ENCODE measurements at regions of chr17 and their contacts with region 1.

Region 1: GRCh38 chr17:45148183-45149036 is at the start of gene HEXIM1:
- DNase-seq: peak; percentile 99
- H3K4me3 Mint-ChIP-seq: peak within 1 kb of the TSS; percentile 97
- H3K27ac Mint-ChIP-seq: peak within 1 kb of the TSS; percentile 100
- H3K4me1 Mint-ChIP-seq: peaks cover 23% of the 10 kb centered on the region
- H3K27me3 Mint-ChIP-seq: no peaks in the 10 kb centered on the region
- CTCF ChIP-seq: no peak
- total RNA-seq, gene HEXIM1: 22.5 and 26.7 TPM in 2 replicates

Region 2: DNA sequence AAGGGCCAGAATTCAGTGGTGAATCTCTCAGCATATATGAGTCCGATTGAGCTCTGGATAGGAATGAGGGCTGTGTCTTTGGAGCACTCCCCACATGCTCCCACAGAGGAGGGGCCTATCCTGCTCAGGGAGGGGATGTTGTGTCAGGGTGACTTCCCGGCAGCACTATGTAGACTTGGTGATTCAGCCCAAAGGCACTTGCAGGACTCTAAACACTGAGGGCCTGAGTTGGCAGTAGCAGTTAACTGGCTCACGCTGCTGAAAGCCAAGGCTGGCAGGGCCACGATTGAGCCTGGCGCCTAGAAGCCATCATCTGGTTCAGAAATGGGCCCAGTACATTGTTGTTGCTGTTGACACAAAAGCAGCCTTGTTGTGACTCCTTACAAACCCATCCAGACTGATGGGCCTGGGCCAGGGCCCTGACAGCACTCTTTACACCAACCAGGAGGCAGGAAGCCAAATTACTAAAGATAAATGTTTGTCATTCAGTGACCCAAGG is 55.4 kb before region 1 on chr17:
- CTCF ChIA-PET with region 1: interaction called, 5 read pairs
- POLR2A ChIA-PET with region 1: interaction called, 15 read pairs
- intact Hi-C with region 1: no loop called
- DNase-seq: peak; percentile 96
- H3K4me3 Mint-ChIP-seq: peak overlapping the region; percentile 44
- H3K27ac Mint-ChIP-seq: peak overlapping the region; percentile 98
- H3K4me1 Mint-ChIP-seq: peaks cover 25% of the 10 kb centered on the region
- H3K27me3 Mint-ChIP-seq: no peaks in the 10 kb centered on the region
- CTCF ChIP-seq: no peak

Region 3: DNA sequence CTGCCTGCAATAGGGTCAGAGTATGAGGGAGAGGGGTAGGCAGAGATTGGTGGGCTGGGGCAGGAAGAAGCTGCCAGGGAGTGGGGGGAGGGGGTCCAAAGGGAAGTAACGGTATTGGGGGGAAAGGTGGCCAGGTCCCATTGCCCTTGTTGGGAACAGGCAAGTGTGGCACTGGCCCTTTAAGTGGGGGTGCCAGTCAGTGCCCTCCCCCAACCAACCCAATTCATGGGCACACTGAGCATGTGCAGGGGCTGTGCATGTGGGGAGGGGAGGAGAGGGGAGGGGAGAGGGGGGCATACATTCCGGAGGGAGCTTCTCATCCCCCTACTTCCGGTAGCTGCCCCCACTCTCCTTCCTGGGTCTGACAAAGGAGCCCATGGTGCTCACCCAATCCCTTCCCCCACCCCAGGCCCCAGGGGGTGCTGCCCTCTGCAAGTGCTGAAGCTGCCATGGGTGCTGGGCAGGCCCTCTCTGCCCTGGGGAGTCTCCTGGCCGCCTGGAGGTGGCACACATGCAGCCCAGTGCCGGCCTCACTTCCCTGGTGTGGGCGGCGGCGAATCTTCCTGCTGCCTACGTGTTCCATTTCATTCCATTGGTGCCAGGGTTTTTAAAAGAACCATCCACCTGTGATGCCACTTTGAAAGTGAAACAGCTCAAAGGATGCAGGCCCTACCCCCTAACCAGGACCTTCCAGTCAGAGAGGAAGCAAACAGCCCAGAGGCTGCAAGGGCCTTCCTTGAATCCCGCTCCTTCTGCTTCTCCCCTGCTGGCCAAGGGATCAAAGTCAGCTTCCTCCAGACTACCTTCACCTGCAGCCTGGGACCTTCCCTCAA is 24.3 kb after region 1 on chr17:
- CTCF ChIA-PET with region 1: interaction called, 108 read pairs
- POLR2A ChIA-PET with region 1: interaction called, 1,083 read pairs
- intact Hi-C with region 1: loop called (anchors 1 kb)
- DNase-seq: peak; percentile 98
- H3K4me3 Mint-ChIP-seq: peak overlapping the region; percentile 78
- H3K27ac Mint-ChIP-seq: peak overlapping the region; percentile 99
- H3K4me1 Mint-ChIP-seq: peaks cover 26% of the 10 kb centered on the region
- H3K27me3 Mint-ChIP-seq: no peaks in the 10 kb centered on the region
- CTCF ChIP-seq: peak; percentile 27

Region 4: DNA sequence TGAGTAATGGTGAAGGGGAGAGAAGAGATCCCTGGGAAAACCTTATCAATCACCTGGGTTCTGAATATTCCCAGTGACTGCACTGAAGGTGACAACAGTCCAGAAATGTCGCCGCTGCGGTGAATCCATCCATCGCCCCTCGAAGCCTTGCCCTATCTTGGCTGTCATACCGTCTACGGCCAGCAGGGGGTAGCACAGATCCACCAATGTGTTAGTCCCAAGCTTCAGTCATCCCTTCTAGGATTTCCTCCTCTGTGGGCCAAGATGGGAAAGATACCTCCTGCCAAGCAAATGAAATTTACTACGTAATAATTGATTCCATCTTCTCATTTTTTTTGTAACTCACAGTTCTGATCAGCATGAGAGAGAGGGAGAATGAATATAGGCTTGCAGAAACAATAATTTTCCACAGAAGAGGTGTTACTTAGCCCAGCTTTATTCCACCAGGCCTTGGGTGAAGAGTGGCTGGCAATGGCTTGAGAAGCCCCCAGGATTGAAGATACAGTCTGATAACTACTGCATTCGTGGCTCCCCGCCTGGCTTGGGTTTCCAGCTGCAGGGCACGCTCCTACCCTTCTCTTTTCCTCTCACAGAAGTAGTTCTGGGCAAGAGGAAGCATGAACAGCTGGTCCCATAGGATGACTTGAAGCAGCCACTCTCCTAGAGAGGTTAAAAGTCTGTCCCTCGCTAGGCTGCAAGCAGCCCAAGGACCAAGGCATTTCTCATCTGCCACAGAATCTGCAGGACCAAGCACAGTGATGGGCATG is 70.7 kb after region 1 on chr17:
- CTCF ChIA-PET with region 1: interaction called, 24 read pairs
- POLR2A ChIA-PET with region 1: interaction called, 4 read pairs
- intact Hi-C with region 1: no loop called
- DNase-seq: peak; percentile 86
- H3K4me3 Mint-ChIP-seq: no peak overlapping the region
- H3K27ac Mint-ChIP-seq: no peak overlapping the region
- H3K4me1 Mint-ChIP-seq: peaks cover 11% of the 10 kb centered on the region
- H3K27me3 Mint-ChIP-seq: no peaks in the 10 kb centered on the region
- CTCF ChIP-seq: peak; percentile 95

Region 5: DNA sequence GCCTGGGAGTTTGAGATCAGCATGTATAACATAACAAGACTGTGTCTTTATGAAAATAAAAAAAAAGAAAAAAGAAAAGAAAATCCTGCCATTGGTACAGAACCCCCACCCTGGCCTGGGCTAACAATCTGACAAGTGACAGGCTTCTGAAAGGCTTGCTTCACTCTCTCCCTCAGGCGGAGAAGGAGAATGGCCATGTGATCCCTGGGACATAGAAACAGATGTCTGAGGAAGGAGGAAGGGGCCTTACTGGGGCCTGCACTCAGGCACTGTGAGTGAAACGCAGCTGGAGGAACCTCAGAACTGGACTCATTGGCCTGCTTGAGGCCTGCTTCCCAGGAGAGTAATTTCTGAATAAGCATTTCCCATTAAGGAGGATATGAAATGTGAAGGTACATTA is 150.9 kb after region 1 on chr17:
- CTCF ChIA-PET with region 1: no interaction called
- POLR2A ChIA-PET with region 1: no interaction called
- intact Hi-C with region 1: no loop called
- DNase-seq: no peak
- H3K4me3 Mint-ChIP-seq: no peak overlapping the region
- H3K27ac Mint-ChIP-seq: peak overlapping the region; percentile 73
- H3K4me1 Mint-ChIP-seq: peaks cover 49% of the 10 kb centered on the region
- H3K27me3 Mint-ChIP-seq: no peaks in the 10 kb centered on the region
- CTCF ChIP-seq: no peak

Region 6: GRCh38 chr17:45317112-45317928 is 168.9 kb after region 1 on chr17:
- CTCF ChIA-PET with region 1: no interaction called
- POLR2A ChIA-PET with region 1: interaction called, 70 read pairs
- intact Hi-C with region 1: loop called (anchors 5 kb)
- DNase-seq: peak; percentile 100
- H3K4me3 Mint-ChIP-seq: peak overlapping the region; percentile 86
- H3K27ac Mint-ChIP-seq: peak overlapping the region; percentile 98
- H3K4me1 Mint-ChIP-seq: peaks cover 71% of the 10 kb centered on the region
- H3K27me3 Mint-ChIP-seq: no peaks in the 10 kb centered on the region
- CTCF ChIP-seq: no peak

Measured in MCF 10A (cell line).